ENCODE measurements at regions of chr10 and their contacts with region 1.

Region 1: GRCh38 chr10:77391605-77392235 is 245.9 kb downstream of the KCNMA1 start:
- DNase-seq: peak; percentile 96
- ATAC-seq: peak; percentile 89
- H3K4me3 Mint-ChIP-seq: no peak overlapping the region
- H3K27ac Mint-ChIP-seq: no peak overlapping the region
- H3K4me1 Mint-ChIP-seq: peaks cover 45% of the 10 kb centered on the region
- H3K27me3 Mint-ChIP-seq: no peaks in the 10 kb centered on the region
- CTCF ChIP-seq: no peak; the same call in none of the 2 replicates

Region 2: DNA sequence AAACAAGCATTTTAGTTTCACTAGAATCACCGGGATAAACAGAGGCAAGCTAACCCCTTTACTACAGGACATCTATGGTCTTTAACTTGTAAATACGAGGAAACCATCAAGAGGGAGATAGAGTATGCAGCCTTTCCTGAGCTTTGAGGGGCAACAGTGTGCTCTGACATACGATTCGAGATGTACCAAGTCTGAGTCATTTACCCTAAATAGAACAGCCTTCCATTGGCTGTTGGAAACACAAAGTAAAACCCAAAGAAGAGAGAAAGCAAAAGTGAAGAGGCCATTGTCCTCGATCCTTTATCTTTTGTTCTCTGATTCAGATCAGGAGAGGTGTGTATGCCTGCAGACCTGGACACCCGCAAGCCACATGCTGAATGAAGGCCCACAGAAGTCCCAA is 43.6 kb before region 1 on chr10:
- CTCF ChIA-PET with region 1: no interaction called
- POLR2A ChIA-PET with region 1: no interaction called
- DNase-seq: no peak
- ATAC-seq: no peak
- H3K4me3 Mint-ChIP-seq: no peak overlapping the region
- H3K27ac Mint-ChIP-seq: no peak overlapping the region
- H3K4me1 Mint-ChIP-seq: no peaks in the 10 kb centered on the region
- H3K27me3 Mint-ChIP-seq: peaks cover 4% of the 10 kb centered on the region
- CTCF ChIP-seq: no peak

Region 3: GRCh38 chr10:77405771-77406241 is 14.1 kb after region 1 on chr10:
- CTCF ChIA-PET with region 1: interaction called, 10 read pairs
- POLR2A ChIA-PET with region 1: no interaction called
- DNase-seq: peak; percentile 80
- ATAC-seq: peak; percentile 87
- H3K4me3 Mint-ChIP-seq: no peak overlapping the region
- H3K27ac Mint-ChIP-seq: no peak overlapping the region
- H3K4me1 Mint-ChIP-seq: peaks cover 12% of the 10 kb centered on the region
- H3K27me3 Mint-ChIP-seq: no peaks in the 10 kb centered on the region
- CTCF ChIP-seq: no peak

Region 4: DNA sequence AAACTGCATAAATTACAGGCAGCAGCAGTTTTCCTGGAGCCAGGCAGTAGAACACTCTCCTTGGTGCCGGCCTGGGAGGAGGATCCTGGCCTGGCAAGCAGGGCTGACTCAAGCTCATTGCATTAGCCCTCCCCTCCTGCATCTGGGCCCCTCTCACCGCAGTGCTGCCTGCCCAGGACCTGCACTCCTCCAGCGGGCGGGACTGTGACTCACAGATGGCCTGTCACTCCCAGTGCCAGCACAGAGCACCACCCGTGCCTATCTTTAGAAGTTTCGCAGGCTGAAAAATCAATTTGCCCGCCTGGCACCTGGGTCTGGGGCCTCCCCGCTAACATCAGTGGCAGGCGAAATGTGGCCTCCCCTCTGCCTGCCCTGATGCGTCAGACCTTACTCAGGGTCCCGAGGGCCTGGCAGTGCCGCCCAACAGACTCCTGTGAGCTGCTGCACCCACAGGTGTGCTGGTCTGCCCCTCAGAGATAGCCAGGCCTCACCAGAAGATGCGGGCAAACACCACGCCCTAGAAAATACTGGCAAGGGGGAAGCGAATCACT is 122.1 kb after region 1 on chr10:
- CTCF ChIA-PET with region 1: no interaction called
- POLR2A ChIA-PET with region 1: no interaction called
- DNase-seq: no peak
- ATAC-seq: peak; percentile 71
- H3K4me3 Mint-ChIP-seq: no peak overlapping the region
- H3K27ac Mint-ChIP-seq: no peak overlapping the region
- H3K4me1 Mint-ChIP-seq: peaks cover 31% of the 10 kb centered on the region
- H3K27me3 Mint-ChIP-seq: no peaks in the 10 kb centered on the region
- CTCF ChIP-seq: no peak